ENCODE measurements at regions of chr6 and their contacts with region 1.

Region 1: DNA sequence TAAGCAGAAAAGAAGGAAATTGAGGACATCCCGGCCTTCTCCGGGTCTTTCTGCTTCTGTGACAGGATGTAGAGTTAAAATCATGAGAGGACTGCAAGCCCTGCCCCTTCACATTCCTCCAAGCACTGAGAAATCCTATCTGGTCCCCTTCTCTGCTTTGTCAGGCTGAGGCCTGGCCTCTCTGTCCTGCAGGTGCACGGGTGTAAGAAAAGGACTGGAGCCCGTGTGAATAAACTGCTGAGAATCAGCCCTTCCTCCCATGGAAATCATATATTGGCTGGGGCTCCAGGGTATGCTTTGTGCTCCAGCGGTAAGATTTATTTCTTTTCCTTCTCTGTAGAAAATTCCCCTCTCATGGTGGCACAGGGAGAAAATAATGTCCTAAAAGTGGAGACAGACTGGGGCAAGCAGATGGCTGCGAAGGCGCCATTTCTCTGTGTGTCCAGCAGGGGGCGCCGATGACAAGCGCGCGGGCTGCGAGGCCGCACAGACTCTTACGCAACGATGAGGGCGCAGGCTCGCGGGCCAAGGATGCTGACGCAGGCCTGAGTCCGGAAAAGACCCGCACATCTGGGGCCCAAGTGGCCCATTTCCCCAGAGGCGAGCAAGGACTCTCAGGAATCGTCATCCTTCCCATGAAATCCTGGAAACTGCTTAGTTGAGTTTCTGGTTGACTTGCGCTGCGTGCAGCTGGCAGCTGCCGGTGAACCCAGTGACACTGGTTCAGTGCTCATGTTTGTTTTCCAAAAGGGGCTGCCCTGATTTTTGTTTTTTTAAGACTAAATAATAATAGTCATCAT is 258.6 kb downstream of the ADGB start:
- DNase-seq: peak; percentile 80
- H3K4me3 ChIP-seq: peak overlapping the region in 2 of 4 donors; percentile 17 to 25
- H3K27ac ChIP-seq: peak overlapping the region; percentile 38 to 64 (median 58)
- H3K4me1 ChIP-seq: peaks cover 0 to 6% (median 0%) of the 10 kb centered on the region in 4 donors
- H3K27me3 ChIP-seq: no peaks in the 10 kb centered on the region
- CTCF ChIP-seq: peak; percentile 95 to 99 (median 99)
- EP300 ChIP-seq: peak; percentile 20
- POLR2A ChIP-seq: no peak

Region 2: GRCh38 chr6:147285087-147285855 is 427.9 kb after region 1 on chr6:
- in situ Hi-C with region 1: loop called (anchors 10 to 25 kb)
- intact Hi-C with region 1: loop called (anchors 10 kb)
- DNase-seq: no peak
- H3K4me3 ChIP-seq: no peak overlapping the region
- H3K27ac ChIP-seq: peak overlapping the region in 1 of 4 donors; percentile 5
- H3K4me1 ChIP-seq: peaks cover 13 to 40% (median 27%) of the 10 kb centered on the region in 4 donors
- H3K27me3 ChIP-seq: no peaks in the 10 kb centered on the region
- CTCF ChIP-seq: peak; percentile 38 to 55 (median 44)
- EP300 ChIP-seq: no peak
- POLR2A ChIP-seq: no peak

Measured in transverse colon (tissue), 4 donors.